BJ (cell line): ENCODE measurements at regions of chr13 and their contacts with region 1.

Region 1: DNA sequence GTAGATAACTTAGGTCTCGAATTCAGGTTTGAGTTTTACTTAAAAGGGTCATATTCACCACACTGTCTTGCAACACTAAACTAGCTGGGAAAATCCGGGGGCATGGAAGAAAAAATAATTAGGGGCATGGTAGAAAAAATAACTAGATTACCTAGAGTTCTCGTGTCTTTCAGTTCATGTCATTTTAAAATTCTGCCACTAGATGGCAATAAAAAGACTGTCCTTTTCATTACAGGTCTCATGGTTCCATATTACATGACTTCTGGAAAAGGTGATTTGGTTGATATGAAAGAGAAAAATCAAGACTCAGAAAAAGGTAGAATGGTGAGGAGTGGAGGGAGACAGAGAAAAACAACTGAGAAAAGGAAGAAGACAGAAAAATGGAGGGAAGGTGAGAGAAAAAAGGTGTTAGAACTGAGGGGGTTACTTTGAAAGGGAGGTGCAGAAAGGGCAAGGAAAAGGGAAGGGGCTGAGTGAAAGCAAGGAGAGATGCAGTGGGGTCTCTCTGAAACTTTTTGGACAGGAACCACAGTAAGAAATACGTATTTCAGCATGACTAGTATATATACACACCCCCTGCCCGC is 299.0 kb downstream of the KLF12 start:
- DNase-seq: no peak
- H3K4me3 ChIP-seq: no peak overlapping the region
- H3K27me3 ChIP-seq: no peaks in the 10 kb centered on the region
- CTCF ChIP-seq: peak; percentile 61

Region 2: GRCh38 chr13:73765651-73766384 is 69.4 kb before region 1 on chr13:
- CTCF ChIA-PET with region 1: no interaction called
- POLR2A ChIA-PET with region 1: no interaction called
- DNase-seq: no peak
- H3K4me3 ChIP-seq: no peak overlapping the region
- H3K27me3 ChIP-seq: no peaks in the 10 kb centered on the region
- CTCF ChIP-seq: no peak

Region 3: DNA sequence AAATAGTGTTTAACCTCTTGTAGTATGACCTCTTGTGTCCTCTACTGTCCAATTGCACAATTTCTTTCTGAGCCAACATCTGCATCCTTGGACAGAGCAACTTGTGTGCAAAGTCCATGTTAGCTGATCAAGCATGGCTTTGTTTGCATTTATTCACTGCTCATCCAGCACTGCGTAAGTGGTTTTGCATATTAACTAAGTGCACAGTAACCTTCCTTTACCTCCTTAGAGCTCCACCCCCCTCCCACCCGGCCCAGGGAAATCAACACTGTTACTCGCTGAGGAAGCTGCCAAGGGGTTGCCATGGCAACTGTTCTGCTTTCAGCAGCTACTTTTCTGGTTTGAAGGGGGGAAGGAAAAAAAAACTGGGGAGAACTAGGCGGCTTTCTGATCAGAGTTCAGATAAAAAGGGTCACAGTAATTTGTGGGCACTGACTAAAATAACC is 452.5 kb after region 1 on chr13:
- CTCF ChIA-PET with region 1: interaction called, 11 read pairs
- POLR2A ChIA-PET with region 1: no interaction called
- DNase-seq: no peak
- H3K4me3 ChIP-seq: no peak overlapping the region
- H3K27me3 ChIP-seq: no peaks in the 10 kb centered on the region
- CTCF ChIP-seq: no peak